ENCODE measurements at regions of chr3 and their contacts with region 1.

Region 1: DNA sequence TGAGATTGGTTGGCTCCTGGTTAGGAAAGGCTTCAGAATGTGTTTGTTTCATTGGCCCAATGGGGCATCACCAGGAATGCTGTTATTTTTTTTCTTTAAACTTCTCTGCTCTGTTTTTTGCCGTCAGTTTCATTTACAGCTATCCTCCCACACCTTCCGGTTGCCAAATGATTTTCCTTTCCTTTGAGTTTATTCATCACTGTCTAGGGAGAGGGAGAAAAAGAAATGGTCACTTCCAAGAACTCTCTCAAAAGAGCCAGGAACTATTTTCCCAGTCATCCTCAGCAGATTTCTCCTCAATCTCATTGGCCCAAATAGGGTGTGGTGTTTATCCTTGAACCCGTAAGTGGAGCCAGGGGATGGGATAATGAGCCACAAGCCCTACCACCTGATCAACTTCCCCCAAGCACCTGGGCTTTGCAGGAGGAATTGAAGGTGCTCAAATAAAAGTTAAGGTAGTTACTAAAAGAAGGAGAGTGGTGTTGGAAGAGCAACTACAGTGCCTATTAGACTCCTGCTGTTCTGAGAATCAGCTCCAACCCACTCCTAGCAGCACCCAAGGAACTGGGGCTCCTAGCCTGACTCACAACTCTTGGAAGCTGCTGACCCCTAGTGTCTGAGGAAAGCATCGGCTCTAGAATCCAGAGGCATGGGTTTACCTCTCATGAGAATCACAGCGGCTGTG is 183.8 kb upstream of the IL12A start:
- DNase-seq: peak; percentile 93
- ATAC-seq: peak; percentile 98
- H3K4me3 ChIP-seq: no peak overlapping the region
- H3K27ac ChIP-seq: no peak overlapping the region
- H3K4me1 ChIP-seq: peaks cover 22% of the 10 kb centered on the region
- H3K27me3 ChIP-seq: no peaks in the 10 kb centered on the region
- CTCF ChIP-seq: peak; percentile 97

Region 2: DNA sequence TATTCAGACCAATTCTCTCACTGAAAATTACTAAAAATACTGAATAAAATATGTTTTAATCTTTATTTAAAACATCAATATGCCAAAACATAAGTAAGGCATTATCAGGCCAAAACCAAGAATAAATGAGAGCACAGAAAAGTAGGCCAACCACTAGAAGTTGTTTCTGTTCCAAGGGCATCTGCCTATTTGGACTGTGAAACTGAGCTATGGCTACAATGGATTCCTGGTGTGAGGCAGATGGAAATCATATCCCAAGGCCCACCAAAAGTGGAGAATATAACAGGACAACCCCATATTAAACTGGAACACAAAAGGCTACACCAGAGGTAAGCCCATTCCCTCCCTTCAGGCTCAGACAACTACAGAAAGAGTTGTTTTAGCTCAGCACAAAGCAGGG is 119.1 kb before region 1 on chr3:
- CTCF ChIA-PET with region 1: no interaction called
- POLR2A ChIA-PET with region 1: no interaction called
- intact Hi-C with region 1: no loop called
- DNase-seq: no peak
- ATAC-seq: no peak
- H3K4me3 ChIP-seq: no peak overlapping the region
- H3K27ac ChIP-seq: no peak overlapping the region
- H3K4me1 ChIP-seq: no peaks in the 10 kb centered on the region
- H3K27me3 ChIP-seq: no peaks in the 10 kb centered on the region
- CTCF ChIP-seq: no peak

Region 3: GRCh38 chr3:159726231-159726964 is 78.5 kb before region 1 on chr3:
- CTCF ChIA-PET with region 1: interaction called, 6 read pairs
- POLR2A ChIA-PET with region 1: no interaction called
- intact Hi-C with region 1: loop called (anchors 10 kb)
- DNase-seq: peak; percentile 97
- ATAC-seq: peak; percentile 92
- H3K4me3 ChIP-seq: peak overlapping the region; percentile 33; the same call in 1 of the 2 replicates
- H3K27ac ChIP-seq: peak overlapping the region; percentile 61
- H3K4me1 ChIP-seq: peaks cover 42% of the 10 kb centered on the region
- H3K27me3 ChIP-seq: no peaks in the 10 kb centered on the region
- CTCF ChIP-seq: no peak

Region 4: GRCh38 chr3:159787191-159787590 is 17.7 kb before region 1 on chr3:
- CTCF ChIA-PET with region 1: interaction called, 13 read pairs
- POLR2A ChIA-PET with region 1: interaction called, 4 read pairs
- intact Hi-C with region 1: loop called (anchors 1 kb)
- DNase-seq: peak; percentile 97
- ATAC-seq: peak; percentile 81
- H3K4me3 ChIP-seq: peak overlapping the region; percentile 45
- H3K27ac ChIP-seq: peak overlapping the region; percentile 80
- H3K4me1 ChIP-seq: peaks cover 77% of the 10 kb centered on the region
- H3K27me3 ChIP-seq: no peaks in the 10 kb centered on the region
- CTCF ChIP-seq: no peak

Measured in PC-3 (cell line).